ENCODE measurements at regions of chr6 and their contacts with region 1.

Region 1: GRCh38 chr6:26223650-26224546 is 136.7 kb downstream of the HFE start:
- DNase-seq: peak; percentile 89
- H3K4me3 ChIP-seq: peak overlapping the region; percentile 73
- H3K27ac ChIP-seq: peak overlapping the region; percentile 89
- H3K27me3 ChIP-seq: no peaks in the 10 kb centered on the region
- CTCF ChIP-seq: no peak

Region 2: GRCh38 chr6:26204332-26205165 is 19.3 kb before region 1 on chr6:
- CTCF ChIA-PET with region 1: interaction called, 3 read pairs
- POLR2A ChIA-PET with region 1: interaction called, 183 read pairs
- DNase-seq: peak; percentile 98
- H3K4me3 ChIP-seq: peak overlapping the region; percentile 95
- H3K27ac ChIP-seq: peak overlapping the region; percentile 99
- H3K27me3 ChIP-seq: no peaks in the 10 kb centered on the region
- CTCF ChIP-seq: peak; percentile 51

Region 3: GRCh38 chr6:26234421-26235296 is 10.8 kb after region 1 on chr6:
- CTCF ChIA-PET with region 1: interaction called, 3 read pairs
- POLR2A ChIA-PET with region 1: interaction called, 40 read pairs
- DNase-seq: no peak
- H3K4me3 ChIP-seq: peak overlapping the region; percentile 65
- H3K27ac ChIP-seq: peak overlapping the region; percentile 91
- H3K27me3 ChIP-seq: no peaks in the 10 kb centered on the region
- CTCF ChIP-seq: no peak

Region 4: GRCh38 chr6:26394289-26394688 is 170.4 kb after region 1 on chr6:
- CTCF ChIA-PET with region 1: no interaction called
- POLR2A ChIA-PET with region 1: no interaction called
- DNase-seq: peak; percentile 32
- H3K4me3 ChIP-seq: no peak overlapping the region
- H3K27ac ChIP-seq: no peak overlapping the region
- H3K27me3 ChIP-seq: no peaks in the 10 kb centered on the region
- CTCF ChIP-seq: no peak

Measured in AG04450 (cell line).